H1 (cell line): ENCODE measurements at regions of chr5 and their contacts with region 1.

Region 1: DNA sequence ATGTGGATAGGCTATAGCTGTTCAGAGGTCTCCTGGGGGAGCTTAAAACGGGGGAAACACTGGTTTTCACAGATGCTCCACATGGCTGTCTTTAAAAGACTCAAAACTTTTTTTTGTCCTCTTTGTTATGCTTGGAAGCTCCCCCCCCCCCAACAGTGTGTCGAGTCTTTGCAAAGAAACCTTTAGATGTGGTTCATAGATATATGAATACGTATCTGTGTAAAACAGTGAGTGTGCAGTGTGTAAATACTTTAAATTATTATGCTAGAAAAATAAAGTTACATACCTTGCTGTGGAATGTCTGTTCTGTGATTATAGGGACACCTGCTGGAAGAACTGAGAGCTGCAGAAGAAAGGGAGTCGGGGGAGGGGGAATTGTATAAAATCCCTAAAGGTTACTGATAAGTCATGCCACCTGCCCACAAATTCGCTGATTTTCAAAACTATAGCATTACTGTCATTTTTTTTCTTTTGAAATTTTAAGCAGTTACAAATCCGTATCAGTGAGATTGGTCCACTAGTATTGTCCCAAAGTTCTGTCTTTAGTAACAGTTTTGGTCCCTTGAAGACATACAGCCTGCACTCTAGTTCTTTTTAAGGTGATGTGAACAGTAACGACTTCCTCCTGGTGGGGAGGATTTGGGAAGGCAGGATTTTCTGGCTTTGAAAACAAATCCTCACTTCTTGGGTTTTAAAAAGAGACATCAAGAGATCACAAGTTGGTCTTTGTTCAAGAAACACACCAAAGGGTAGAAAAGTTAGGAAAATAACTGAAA is 22.9 kb downstream of the RGMB start:
- DNase-seq: peak in 1 of 2 experiments; percentile 71
- H3K4me3 ChIP-seq: peak overlapping the region in 1 of 4 experiments; percentile 6; a peak in 1 of 8 replicates
- H3K27ac ChIP-seq: no peak overlapping the region
- H3K4me1 ChIP-seq: peaks cover 3 to 6% (median 3%) of the 10 kb centered on the region in 4 experiments; a peak in 4 of 7 replicates
- H3K27me3 ChIP-seq: no peaks in the 10 kb centered on the region
- CTCF ChIP-seq: peak in 2 of 3 experiments; percentile 48 to 66; a peak in 2 of 4 replicates
- EP300 ChIP-seq: no peak
- POLR2A ChIP-seq: no peak
- RAD21 ChIP-seq: peak; percentile 71 to 74

Region 2: GRCh38 chr5:98436667-98437066 is 359.7 kb before region 1 on chr5:
- CTCF ChIA-PET with region 1: no interaction called
- POLR2A ChIA-PET with region 1: no interaction called
- DNase-seq: no peak
- H3K4me3 ChIP-seq: no peak overlapping the region
- H3K27ac ChIP-seq: no peak overlapping the region
- H3K4me1 ChIP-seq: peaks cover 5 to 9% (median 6%) of the 10 kb centered on the region in 4 experiments; a peak in 6 of 7 replicates
- H3K27me3 ChIP-seq: no peaks in the 10 kb centered on the region
- CTCF ChIP-seq: no peak
- EP300 ChIP-seq: no peak
- POLR2A ChIP-seq: no peak
- RAD21 ChIP-seq: no peak

Region 3: DNA sequence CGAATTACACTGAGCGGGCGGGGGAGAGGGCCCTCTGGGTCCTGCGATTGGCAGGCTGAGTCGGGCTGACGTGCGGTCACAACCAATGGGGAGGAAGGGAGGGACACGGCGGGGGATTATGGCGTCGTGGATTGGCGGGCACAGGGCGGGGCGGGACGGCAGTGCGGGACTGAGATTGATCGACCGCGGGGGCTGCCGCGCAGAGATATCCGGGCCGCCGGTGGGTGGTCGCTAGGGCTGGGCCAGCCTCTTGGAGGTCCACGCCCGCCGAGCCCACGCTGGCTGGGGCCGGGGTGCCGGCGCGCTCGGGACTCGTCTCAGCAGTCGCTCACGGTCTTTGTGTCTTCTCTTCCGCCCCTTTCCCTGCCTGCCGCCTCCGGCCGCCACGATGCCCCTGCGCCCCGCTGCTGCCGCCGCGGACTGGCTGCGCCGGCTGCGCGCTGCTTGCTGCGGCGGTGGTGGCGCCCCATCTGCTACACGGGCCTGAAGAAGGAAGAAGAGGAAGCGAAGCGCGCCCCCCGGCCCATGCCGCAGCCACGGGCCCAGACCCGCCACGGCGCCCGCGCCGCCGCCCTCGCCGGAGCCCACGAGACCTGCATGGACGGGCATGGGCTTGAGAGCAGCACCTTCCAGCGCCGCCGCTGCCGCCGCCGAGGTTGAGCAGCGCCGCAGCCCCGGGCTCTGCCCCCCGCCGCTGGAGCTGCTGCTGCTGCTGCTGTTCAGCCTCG is 22.8 kb before region 1 on chr5 and contains the start of gene RGMB:
- CTCF ChIA-PET with region 1: interaction called, 81 read pairs
- POLR2A ChIA-PET with region 1: interaction called, 23 read pairs
- DNase-seq: peak; percentile 96 to 98
- H3K4me3 ChIP-seq: peak within 1 kb of the TSS; percentile 68 to 91 (median 86)
- H3K27ac ChIP-seq: peak within 1 kb of the TSS; percentile 89
- H3K4me1 ChIP-seq: peaks cover 3 to 10% (median 5%) of the 10 kb centered on the region in 4 experiments; a peak in 6 of 7 replicates
- H3K27me3 ChIP-seq: peaks cover 0 to 19% (median 13%) of the 10 kb centered on the region in 4 experiments; a peak in 6 of 7 replicates
- CTCF ChIP-seq: no peak
- EP300 ChIP-seq: no peak
- POLR2A ChIP-seq: peak in 1 of 2 experiments; percentile 89; a peak in 2 of 3 replicates
- RAD21 ChIP-seq: no peak
- total RNA-seq, gene RGMB: 27.0 and 27.9 TPM in 2 replicates

Region 4: GRCh38 chr5:98786191-98786853 is 10.1 kb before region 1 on chr5:
- CTCF ChIA-PET with region 1: interaction called, 28 read pairs
- POLR2A ChIA-PET with region 1: interaction called, 12 read pairs
- DNase-seq: no peak
- H3K4me3 ChIP-seq: no peak overlapping the region
- H3K27ac ChIP-seq: no peak overlapping the region
- H3K4me1 ChIP-seq: peaks cover 0 to 16% (median 10%) of the 10 kb centered on the region in 4 experiments; a peak in 5 of 7 replicates
- H3K27me3 ChIP-seq: no peaks in the 10 kb centered on the region
- CTCF ChIP-seq: no peak
- EP300 ChIP-seq: no peak
- POLR2A ChIP-seq: no peak
- RAD21 ChIP-seq: no peak

Region 5: DNA sequence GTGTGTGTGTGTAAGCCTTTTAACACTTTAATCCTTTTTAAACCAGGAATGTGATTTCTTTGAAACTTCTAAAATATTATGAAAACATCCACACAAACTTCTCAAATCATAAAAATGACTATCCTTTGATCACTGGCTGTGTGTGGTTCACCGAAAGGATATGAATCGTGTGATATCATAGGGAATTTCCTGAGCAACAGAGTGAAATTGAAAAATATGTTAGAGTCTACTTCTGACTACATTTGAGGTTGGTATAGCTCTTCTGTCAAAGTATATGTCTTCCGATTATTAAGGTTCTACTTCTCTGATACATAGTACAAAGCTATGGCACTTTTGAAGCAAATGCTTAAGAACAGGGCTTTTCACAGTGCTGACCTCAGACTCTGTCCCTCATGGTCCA is 17.4 kb after region 1 on chr5:
- CTCF ChIA-PET with region 1: interaction called, 10 read pairs
- POLR2A ChIA-PET with region 1: interaction called, 6 read pairs
- DNase-seq: no peak
- H3K4me3 ChIP-seq: no peak overlapping the region
- H3K27ac ChIP-seq: no peak overlapping the region
- H3K4me1 ChIP-seq: no peaks in the 10 kb centered on the region
- H3K27me3 ChIP-seq: no peaks in the 10 kb centered on the region
- CTCF ChIP-seq: no peak
- EP300 ChIP-seq: no peak
- POLR2A ChIP-seq: no peak
- RAD21 ChIP-seq: no peak